ENCODE measurements at regions of chr3 and their contacts with region 1.

Region 1: DNA sequence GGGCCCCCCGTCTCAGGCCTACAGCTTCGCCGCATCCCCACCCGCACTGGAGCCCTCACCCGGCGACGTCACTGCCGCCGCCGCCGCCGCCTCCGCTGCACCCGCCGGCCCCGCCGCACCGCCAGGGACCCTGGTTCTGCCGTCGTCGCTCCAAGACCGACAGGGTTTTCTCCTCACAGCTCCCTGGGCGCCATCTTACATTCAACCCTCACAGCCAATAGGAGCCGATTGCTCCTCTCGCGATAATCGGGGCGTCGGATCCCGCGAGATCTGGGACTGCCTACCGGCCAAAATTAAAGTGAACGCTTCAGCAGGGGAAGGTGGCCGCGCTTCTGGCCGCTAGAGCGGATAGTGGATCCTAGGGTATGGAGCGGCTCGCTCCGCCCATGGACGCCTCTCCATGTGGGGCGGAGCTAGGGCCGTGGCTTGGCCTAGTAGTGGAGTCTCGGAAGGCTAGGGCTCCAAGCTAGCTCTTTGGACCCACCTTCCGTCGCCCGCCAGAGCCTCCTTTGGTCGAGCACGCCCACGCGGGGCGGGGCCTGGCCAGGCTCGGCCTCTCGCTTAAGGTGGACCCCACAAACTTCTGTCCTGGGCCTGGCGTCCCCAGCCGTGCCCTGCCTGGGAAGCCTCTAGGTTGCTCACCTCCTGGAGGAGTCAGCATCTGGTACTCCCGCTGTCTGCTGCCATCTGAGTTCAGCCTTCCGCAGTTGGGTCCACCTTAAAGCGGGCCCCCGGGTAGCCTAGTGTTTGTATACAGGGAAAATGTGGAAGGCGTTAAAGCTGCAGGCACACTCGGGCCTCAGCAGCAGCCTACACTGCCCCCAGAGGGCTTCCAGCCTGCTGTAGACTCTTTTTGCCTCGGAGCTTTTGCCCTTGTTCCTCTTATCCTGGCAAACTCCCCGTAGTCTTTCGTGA is at the start of gene QRICH1:
- DNase-seq: peak; percentile 94
- H3K4me3 Mint-ChIP-seq: peak within 1 kb of the TSS; percentile 97
- H3K27ac Mint-ChIP-seq: peak within 1 kb of the TSS; percentile 98
- H3K4me1 Mint-ChIP-seq: peaks cover 30% of the 10 kb centered on the region
- H3K27me3 Mint-ChIP-seq: no peaks in the 10 kb centered on the region
- total RNA-seq, gene QRICH1: 147 and 150 TPM in 2 replicates

Region 2: DNA sequence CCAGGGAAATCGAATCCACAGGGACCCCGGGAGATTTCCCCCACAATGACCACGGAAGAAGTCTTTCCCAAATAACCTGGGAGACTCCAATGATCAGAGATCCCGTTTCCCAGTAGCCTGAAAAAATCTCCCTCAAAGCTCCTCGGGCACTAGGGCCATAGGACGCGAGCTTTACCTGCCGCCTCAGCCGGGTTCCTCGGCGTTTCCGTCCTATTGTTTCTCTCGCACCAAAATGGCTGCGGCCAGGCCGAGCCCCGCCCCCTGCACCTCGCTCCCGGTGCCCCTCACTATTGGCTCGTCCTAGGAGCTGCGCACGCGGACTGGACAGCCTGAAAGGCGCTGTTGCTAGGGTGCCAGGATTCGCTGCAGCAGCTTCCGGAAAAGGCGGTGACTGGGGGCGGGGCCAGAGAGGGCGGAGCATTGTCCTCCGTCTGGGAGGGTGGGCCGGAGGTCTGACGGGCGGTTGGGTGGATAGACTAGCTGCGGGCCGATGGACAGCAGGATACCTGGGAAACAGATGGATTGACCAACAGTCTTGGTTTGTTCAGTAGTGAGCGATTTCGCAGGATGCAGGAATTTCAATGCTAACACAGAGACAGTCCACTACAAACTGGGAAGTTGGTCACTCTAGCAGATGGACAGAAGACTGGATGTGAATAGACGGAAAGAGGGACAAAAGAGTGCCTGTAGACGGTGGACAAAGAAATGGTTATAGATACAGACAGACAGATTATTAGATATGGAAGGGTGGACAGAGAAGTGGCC is 376.9 kb before region 1 on chr3 and contains the start of gene IP6K2:
- intact Hi-C with region 1: loop called (anchors 1 kb)
- DNase-seq: peak; percentile 98
- H3K4me3 Mint-ChIP-seq: peak within 1 kb of the TSS; percentile 98
- H3K27ac Mint-ChIP-seq: peak within 1 kb of the TSS; percentile 94
- H3K4me1 Mint-ChIP-seq: peaks cover 29% of the 10 kb centered on the region
- H3K27me3 Mint-ChIP-seq: peaks cover 17% of the 10 kb centered on the region
- total RNA-seq, gene IP6K2: 59.9 and 61.0 TPM in 2 replicates

Region 3: DNA sequence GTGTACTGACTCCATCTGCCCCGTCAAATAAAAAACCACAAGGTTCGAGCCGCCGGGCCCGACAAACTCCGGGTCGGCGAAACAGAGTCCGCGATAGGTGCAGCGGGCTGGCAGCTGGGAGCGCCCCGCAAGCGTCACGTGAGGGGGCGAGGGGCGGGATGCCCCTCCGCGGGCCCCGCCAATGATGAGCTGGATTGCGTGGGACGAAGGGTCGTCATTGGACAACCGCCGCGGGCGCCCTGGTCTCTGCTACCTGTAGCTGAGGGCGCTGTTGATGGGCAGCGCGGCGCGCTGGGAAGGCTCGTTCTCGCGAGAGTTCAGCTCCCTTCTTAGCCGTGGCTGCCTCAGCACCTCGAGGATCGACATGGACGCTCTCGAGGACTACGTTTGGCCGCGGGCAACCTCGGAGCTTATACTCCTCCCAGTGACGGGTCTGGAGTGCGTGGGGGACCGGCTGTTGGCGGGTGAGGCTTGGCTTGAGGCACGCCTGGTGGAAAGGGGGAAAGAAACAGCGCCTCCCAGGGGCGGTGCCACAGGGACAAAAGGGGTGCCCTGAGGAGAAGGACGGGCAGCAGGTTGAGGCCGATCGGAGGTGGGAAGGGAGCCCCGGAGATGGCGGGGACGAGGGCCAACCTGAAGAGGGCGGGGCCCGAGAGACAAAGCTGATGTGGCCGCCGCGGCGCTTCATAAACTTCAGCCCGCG is 86.9 kb before region 1 on chr3 and contains the start of gene WDR6:
- intact Hi-C with region 1: loop called (anchors 1 kb)
- DNase-seq: peak; percentile 96
- H3K4me3 Mint-ChIP-seq: peak within 1 kb of the TSS; percentile 98
- H3K27ac Mint-ChIP-seq: peak within 1 kb of the TSS; percentile 100
- H3K4me1 Mint-ChIP-seq: peaks cover 29% of the 10 kb centered on the region
- H3K27me3 Mint-ChIP-seq: no peaks in the 10 kb centered on the region
- total RNA-seq, gene WDR6: 143 and 145 TPM in 2 replicates

Region 4: DNA sequence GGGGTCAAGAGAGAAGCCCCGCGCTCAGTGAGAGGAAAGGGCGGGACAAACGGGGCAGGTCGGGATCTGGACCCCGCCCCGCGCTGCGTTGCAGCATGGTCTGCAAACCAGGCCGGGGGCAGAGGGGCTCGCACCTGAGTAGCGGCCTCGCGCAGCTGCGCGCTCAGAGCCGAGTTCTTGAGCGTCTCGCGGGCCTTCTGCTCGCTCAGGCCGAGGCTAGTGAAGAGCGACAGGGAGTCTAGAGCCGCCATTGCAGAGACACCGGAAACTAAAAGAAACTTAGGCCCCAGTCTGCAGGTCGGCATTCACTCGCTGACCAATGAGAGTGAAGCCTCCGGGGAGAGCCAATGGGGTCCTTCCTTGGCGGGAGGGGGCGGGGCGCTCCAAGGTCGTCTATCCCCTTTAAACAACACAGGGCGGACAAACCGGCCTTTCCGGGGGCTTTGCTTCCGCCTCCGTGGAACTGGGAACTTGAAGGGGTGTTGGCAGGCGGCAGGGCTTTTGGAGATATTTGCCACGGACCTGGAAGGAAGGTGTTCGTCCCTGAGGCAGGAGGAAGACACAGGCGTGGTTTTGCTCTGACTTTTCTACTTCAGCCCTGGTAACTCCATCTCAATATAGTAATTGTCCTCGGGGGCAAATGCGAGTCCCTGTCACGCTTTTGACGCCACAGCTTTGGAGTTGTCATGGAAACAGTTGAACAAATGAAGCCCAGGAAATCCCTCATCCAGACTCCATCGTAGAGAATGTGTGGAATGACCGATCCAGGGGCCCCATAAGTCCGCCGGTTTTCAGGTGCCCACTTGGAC is 10.6 kb after region 1 on chr3 and contains the start of gene QARS1:
- intact Hi-C with region 1: loop called (anchors 1 kb)
- DNase-seq: peak; percentile 87
- H3K4me3 Mint-ChIP-seq: peak within 1 kb of the TSS; percentile 98
- H3K27ac Mint-ChIP-seq: peak within 1 kb of the TSS; percentile 94
- H3K4me1 Mint-ChIP-seq: peaks cover 27% of the 10 kb centered on the region
- H3K27me3 Mint-ChIP-seq: no peaks in the 10 kb centered on the region
- total RNA-seq, gene QARS1: 185 and 200 TPM in 2 replicates

Region 5: DNA sequence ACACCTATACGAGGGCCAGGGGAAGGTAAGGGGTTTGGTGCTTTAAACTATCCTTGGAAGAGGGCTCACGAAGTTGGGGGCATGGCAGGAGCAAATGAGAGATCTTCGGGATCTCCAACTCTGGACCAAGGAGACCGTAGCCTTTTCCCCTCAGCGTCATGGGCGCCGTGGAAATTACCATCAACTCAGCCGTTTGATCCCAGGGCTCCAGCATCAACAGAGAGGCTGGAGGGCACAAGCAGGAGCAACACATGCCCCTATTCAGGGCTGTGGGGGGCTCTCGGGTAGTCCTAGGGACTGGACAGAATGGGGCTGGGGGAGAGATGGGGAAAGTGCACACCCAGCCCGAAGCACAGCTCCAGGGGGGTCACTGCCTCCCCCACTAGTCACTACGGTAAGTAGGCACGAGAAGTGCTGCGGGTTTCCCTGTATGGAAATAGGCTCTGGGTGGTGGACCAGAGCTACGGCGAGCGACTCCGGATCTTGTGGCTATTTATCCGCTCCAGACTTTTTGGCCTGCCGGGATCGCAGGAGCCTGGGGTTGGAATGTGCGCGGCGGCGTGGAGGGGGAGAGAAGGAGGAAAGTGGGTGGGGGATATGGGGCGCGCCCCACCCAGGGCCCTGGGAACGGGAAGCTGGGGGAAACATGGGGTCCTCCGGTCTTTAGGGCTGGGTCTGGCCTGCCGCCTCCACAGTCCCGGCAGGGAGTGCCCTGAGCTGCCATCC is 39.3 kb after region 1 on chr3:
- intact Hi-C with region 1: no loop called
- DNase-seq: no peak
- H3K4me3 Mint-ChIP-seq: no peak overlapping the region
- H3K27ac Mint-ChIP-seq: no peak overlapping the region
- H3K4me1 Mint-ChIP-seq: no peaks in the 10 kb centered on the region
- H3K27me3 Mint-ChIP-seq: peaks cover 5% of the 10 kb centered on the region

Region 6: DNA sequence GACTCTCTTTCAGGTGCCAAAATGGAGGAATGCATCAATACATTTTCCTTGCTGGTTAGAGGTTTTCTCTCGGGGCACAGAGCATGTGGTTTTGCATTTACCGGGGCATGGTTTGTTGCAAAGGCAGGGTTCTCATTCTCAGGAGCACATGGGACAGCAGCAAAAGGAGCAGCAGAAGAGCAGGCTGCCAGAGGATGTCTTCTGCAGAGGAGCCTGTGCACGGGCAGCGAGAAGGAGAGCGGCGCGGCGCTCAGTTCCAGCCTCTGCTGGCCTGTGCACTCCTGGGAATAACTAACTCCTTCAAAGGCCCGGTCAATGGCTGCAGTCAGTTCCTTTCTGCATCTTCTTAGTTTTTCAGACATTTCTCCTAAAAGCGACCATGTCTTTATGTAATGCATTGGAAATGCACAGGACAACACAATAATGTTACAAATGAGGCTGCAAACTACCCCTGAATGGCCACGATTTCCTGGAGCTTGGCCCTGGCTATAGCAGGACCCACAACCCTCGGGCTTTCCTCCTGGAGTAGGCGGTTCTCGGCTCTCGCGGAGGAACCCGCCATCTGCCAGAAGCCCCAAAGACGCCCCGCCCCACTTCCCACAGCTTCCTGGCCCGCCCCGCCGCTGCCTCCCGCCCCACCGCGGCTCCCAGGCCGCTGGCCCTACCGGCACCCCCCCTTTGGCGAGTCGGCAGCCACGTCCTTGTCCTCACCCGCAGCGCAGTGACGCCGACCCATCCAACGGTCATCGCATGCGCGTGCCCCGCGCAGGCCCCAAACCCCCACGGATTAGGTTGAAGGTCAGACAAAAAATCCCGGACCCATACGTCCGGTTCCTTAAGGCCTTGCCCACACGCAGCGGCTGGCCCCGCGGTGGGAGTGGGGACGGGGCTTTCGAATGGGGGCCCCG is 182.6 kb after region 1 on chr3 and contains the start of gene C3orf62:
- intact Hi-C with region 1: loop called (anchors 1 kb)
- DNase-seq: peak; percentile 70
- H3K4me3 Mint-ChIP-seq: peak within 1 kb of the TSS; percentile 82
- H3K27ac Mint-ChIP-seq: peak within 1 kb of the TSS; percentile 82
- H3K4me1 Mint-ChIP-seq: peaks cover 21% of the 10 kb centered on the region
- H3K27me3 Mint-ChIP-seq: no peaks in the 10 kb centered on the region
- total RNA-seq, gene C3orf62: 9.1 and 10.1 TPM in 2 replicates

Region 7: GRCh38 chr3:49411968-49412631 is 318.0 kb after region 1 on chr3 and contains the starts of genes RHOA and TCTA:
- intact Hi-C with region 1: loop called (anchors 1 kb)
- DNase-seq: peak; percentile 99
- H3K4me3 Mint-ChIP-seq: peak within 1 kb of the TSS; percentile 98
- H3K27ac Mint-ChIP-seq: peak within 1 kb of the TSS; percentile 96
- H3K4me1 Mint-ChIP-seq: peaks cover 71% of the 10 kb centered on the region
- H3K27me3 Mint-ChIP-seq: no peaks in the 10 kb centered on the region
- total RNA-seq, gene RHOA: 376 and 381 TPM in 2 replicates
- total RNA-seq, gene TCTA: 27.8 and 30.0 TPM in 2 replicates

Region 8: DNA sequence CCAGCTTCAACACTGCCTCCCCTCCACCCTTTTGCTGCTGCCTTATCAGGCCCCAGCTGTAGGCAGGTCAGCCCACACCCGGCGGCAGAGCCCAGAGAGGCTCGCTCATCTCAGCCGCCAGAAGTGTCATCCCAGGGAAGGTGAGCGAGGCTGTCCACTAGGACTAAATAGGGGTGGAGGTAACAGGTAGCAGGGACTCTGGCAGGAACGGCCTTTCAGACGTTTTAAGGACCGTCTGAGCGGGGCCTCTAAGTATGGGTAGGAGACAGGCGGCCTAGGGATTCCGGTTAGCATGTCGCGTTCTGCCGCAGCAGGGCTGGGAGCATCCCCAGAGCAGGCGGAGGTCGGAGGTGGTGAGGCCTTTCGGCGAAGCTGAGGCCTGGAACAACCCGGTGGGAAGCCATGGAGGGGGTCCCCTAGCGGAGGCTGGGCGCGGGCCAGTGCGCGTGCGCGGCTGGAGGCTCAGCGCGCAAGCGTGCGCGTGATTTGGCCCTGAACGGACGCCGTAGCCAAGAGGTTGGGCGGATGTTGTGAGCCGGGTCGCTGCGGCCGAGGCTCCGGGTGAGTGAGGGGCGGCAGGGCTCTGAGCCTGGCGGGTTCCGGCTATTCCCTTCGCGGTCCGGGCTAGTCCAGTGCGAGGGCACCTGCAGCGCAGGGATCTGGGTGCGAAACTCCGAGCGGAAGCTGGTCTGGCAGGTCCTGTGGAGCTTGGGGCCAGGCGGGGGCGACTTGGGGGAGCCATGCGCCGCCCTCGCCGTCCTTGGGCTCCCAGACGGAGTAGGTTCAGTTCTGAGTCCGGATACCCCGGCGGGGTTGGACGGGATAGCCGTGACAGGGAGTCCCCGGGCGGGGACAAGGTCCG is 595.2 kb after region 1 on chr3 and contains the starts of genes MST1 and RNF123:
- intact Hi-C with region 1: loop called (anchors 5 kb)
- DNase-seq: peak; percentile 91
- H3K4me3 Mint-ChIP-seq: peak within 1 kb of the TSS; percentile 97
- H3K27ac Mint-ChIP-seq: peak within 1 kb of the TSS; percentile 91
- H3K4me1 Mint-ChIP-seq: peaks cover 21% of the 10 kb centered on the region
- H3K27me3 Mint-ChIP-seq: peaks cover 2% of the 10 kb centered on the region
- total RNA-seq, gene MST1: 6.5 and 8.2 TPM in 2 replicates
- total RNA-seq, gene RNF123: 53.8 and 54.3 TPM in 2 replicates

Region 9: DNA sequence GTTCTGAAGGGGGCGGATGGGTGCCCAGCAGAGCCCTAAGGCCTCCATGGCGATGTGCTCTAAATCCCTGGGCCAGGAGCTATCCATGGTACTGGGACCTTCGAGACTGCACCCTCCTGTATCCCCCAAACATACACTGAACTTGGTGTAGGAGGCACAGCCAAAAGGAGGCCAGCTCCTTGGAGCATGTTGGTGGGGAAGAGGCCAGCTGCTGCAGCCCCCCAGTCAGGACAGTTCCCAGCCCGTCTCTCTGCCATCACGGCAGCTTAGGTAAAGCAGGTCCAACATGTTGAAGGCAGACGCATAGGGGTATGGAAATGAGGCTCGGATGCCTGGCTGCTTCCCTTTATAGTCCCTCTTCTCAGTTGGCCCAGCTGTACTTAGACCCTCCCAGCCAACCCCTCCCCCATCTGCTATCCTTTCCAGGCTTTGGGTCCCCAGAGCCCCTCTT is 773.8 kb after region 1 on chr3:
- intact Hi-C with region 1: no loop called
- DNase-seq: no peak
- H3K4me3 Mint-ChIP-seq: peak overlapping the region; percentile 49
- H3K27ac Mint-ChIP-seq: no peak overlapping the region
- H3K4me1 Mint-ChIP-seq: no peaks in the 10 kb centered on the region
- H3K27me3 Mint-ChIP-seq: peaks cover 36% of the 10 kb centered on the region

Measured in activated T-helper 1 cell treated with anti-CD3 and anti-CD28 coated beads, Interleukin-12 subunit alpha, Interleukin-12 subunit beta, Interleukin-2, Interleukin-4 antibody, amounts not matched to agents 30 ng/mL and 10 ng/mL and 1 ng/mL, durations not matched to agents 14 hours and 24 hours and 36 hours (primary cell).